CD4-positive, alpha-beta T cell (primary cell): ENCODE measurements at regions of chr11 and their contacts with region 1.

Region 1: DNA sequence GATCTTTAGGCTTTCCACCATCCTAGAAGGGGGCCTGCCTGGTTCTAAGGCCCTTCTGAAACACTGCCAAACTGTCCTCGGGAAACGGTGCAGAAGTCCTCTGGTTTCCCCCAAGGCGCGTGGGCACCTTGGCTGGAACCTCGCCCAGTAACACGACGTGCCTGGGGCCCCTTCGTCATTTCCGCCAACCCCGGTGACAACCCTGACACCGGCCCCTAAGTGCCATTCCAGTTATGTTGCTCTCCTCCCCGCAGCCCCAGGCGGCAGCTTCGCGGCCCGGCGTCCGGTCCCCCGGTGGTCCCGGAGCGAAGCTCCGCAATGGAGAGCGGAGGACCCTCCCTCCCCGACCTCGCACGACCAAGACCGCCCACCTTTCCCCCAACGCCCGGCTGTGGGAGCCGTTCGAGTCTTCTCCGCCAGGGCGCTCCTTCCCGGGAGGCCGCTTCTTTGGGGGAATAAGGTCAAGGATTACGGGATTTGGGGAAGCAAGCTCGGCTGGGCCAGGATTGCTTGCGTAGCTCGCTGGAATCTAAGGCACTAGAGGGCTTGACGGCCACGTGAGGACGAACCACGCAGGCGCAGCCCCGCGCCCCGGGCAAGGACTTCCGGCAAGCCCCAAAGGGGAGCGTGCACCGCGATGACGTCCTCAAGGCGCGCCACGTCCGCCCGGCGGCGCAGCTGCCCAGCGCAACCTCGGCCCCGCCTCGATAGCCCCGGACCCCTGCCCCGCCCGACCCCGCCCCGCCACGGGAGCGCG is 626 bp downstream of the RNH1 start:
- DNase-seq: peak; percentile 93 to 99 (median 97)
- ATAC-seq: peak; percentile 67
- H3K4me3 ChIP-seq: peak overlapping the region; percentile 78
- H3K4me3 Mint-ChIP-seq: peak overlapping the region; percentile 97
- H3K27ac ChIP-seq: peak overlapping the region; percentile 100
- H3K27ac Mint-ChIP-seq: peak overlapping the region; percentile 100
- H3K4me1 ChIP-seq: peaks cover 53% of the 10 kb centered on the region
- H3K4me1 Mint-ChIP-seq: peaks cover 24% of the 10 kb centered on the region
- H3K27me3 ChIP-seq: no peaks in the 10 kb centered on the region
- H3K27me3 Mint-ChIP-seq: peaks cover 4% of the 10 kb centered on the region
- CTCF ChIP-seq: no peak

Region 2: DNA sequence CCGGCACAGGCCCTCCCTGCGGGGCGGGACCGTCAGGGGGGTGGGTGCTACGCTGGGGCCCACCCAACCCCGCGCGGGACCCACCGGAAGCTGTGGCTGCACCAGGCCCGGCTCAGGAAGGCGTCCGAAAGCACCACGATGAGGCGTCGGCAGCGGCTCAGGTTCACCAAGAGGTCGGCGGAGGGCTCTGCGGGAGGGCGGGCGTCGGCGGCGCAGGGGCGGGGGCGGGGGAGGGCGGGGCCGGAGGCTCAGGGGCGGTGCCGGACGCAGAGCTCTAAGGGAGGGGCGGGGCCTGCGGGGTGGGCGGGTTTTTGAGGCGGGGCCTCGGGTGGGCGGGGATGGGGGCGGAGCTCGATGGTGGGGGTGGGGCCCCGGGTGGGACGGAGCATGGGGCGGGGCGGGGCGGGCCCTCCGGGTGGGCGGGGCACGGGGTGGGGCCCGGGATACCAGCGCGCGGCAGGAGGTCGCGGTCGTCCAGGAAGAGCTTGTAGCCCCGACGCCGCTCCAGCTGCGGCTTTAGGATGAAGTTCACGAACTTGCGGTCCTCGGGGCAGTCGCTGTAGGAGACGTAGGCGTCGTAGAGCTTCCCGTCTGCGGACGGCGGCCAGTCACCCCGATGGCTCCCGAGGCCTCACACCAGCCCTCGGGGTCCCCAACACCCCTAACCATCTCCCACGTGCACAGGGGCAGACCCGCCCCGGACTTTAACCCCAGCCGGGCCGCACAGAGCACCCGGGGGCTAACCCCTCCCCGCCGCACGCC is 99.3 kb before region 1 on chr11:
- CTCF ChIA-PET with region 1: interaction called, 3 read pairs
- POLR2A ChIA-PET with region 1: interaction called, 19 read pairs
- intact Hi-C with region 1: loop called (anchors 2 kb)
- DNase-seq: peak; percentile 84 to 97 (median 91)
- ATAC-seq: peak; percentile 84
- H3K4me3 ChIP-seq: peak overlapping the region; percentile 39
- H3K4me3 Mint-ChIP-seq: no peak overlapping the region
- H3K27ac ChIP-seq: peak overlapping the region; percentile 64 to 67
- H3K27ac Mint-ChIP-seq: peak overlapping the region; percentile 76
- H3K4me1 ChIP-seq: peaks cover 46% of the 10 kb centered on the region
- H3K4me1 Mint-ChIP-seq: peaks cover 8% of the 10 kb centered on the region
- H3K27me3 ChIP-seq: no peaks in the 10 kb centered on the region
- H3K27me3 Mint-ChIP-seq: no peaks in the 10 kb centered on the region
- CTCF ChIP-seq: no peak

Region 3: DNA sequence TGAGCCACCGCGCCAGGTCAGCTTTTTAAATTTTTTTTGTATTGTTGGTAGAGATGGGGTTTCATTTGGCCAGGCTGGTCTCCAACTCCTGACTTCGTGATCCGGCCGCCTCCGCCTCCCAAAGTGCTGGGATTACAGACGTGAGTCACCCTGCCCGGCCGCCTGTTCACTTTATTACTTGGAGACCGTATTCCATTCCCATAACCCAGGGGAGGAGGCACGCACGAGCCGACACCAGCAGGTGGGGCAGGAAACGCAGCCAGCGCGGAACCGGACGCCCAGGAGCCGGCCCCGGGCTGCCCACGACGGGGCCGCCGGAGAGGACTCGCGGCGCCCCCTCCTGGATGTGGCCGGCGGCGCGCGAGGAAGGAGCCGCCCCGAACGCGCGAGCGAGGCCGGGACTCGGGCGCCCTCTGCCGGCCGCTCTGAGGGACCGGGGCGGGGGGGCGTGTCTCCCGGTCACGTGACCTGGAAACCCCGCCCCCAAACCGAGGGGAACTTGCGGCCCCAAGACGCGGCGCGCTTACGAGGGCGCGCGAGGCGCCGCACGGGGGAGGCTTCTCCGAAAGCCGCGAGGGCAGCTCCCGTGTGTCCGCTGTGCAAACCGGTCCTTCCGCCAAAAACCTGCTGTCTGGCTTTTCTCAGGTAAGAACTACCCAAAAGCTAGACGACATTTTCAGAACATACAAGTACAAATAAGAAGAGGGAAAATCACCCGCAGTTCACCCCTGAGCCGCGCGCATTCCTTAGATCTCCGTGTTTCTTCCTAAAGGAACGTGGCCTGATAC is 12.2 kb after region 1 on chr11:
- CTCF ChIA-PET with region 1: interaction called, 10 read pairs
- POLR2A ChIA-PET with region 1: interaction called, 23 read pairs
- intact Hi-C with region 1: loop called in 1 of 2 experiments (anchors 1 kb)
- DNase-seq: peak; percentile 79 to 95 (median 86)
- ATAC-seq: peak; percentile 94
- H3K4me3 ChIP-seq: peak overlapping the region; percentile 43
- H3K4me3 Mint-ChIP-seq: peak overlapping the region; percentile 85
- H3K27ac ChIP-seq: peak overlapping the region in 1 of 2 donors; percentile 41
- H3K27ac Mint-ChIP-seq: no peak overlapping the region
- H3K4me1 ChIP-seq: peaks cover 8% of the 10 kb centered on the region
- H3K4me1 Mint-ChIP-seq: peaks cover 4% of the 10 kb centered on the region
- H3K27me3 ChIP-seq: no peaks in the 10 kb centered on the region
- H3K27me3 Mint-ChIP-seq: no peaks in the 10 kb centered on the region
- CTCF ChIP-seq: peak; percentile 96

Region 4: GRCh38 chr11:568306-569157 is 62.1 kb after region 1 on chr11:
- CTCF ChIA-PET with region 1: no interaction called
- POLR2A ChIA-PET with region 1: no interaction called
- intact Hi-C with region 1: loop called in 1 of 2 experiments (anchors 2 kb)
- DNase-seq: peak; percentile 81 to 97 (median 90)
- ATAC-seq: peak; percentile 91
- H3K4me3 ChIP-seq: peak overlapping the region; percentile 70
- H3K4me3 Mint-ChIP-seq: peak overlapping the region; percentile 82
- H3K27ac ChIP-seq: peak overlapping the region; percentile 17 to 69
- H3K27ac Mint-ChIP-seq: no peak overlapping the region
- H3K4me1 ChIP-seq: peaks cover 14% of the 10 kb centered on the region
- H3K4me1 Mint-ChIP-seq: peaks cover 4% of the 10 kb centered on the region
- H3K27me3 ChIP-seq: no peaks in the 10 kb centered on the region
- H3K27me3 Mint-ChIP-seq: no peaks in the 10 kb centered on the region
- CTCF ChIP-seq: no peak

Region 5: DNA sequence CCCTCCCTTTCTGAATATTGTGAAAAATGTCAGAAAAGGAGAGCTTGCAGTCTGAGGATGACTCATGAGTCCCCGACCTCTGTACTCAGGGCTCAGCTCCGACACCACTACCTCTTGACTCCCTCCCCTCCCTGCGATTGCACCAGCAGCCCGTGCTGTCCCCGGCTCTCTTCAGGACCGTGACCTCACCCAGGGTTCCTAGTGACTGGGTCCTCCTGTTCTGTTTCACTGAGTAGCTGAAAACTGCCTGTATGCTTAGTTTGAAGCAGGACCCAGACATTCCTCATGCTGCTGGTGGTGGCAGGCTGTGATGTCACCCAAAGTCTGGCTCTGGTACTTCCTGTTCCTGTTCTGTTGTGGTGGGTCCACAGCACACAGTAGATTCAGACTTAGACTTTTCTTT is 81.6 kb after region 1 on chr11:
- CTCF ChIA-PET with region 1: no interaction called
- POLR2A ChIA-PET with region 1: no interaction called
- intact Hi-C with region 1: no loop called
- DNase-seq: peak; percentile 40 to 89 (median 71)
- ATAC-seq: peak; percentile 91
- H3K4me3 ChIP-seq: no peak overlapping the region
- H3K4me3 Mint-ChIP-seq: peak overlapping the region; percentile 56
- H3K27ac ChIP-seq: peak overlapping the region; percentile 51 to 77
- H3K27ac Mint-ChIP-seq: peak overlapping the region; percentile 96
- H3K4me1 ChIP-seq: peaks cover 20% of the 10 kb centered on the region
- H3K4me1 Mint-ChIP-seq: peaks cover 22% of the 10 kb centered on the region
- H3K27me3 ChIP-seq: no peaks in the 10 kb centered on the region
- H3K27me3 Mint-ChIP-seq: no peaks in the 10 kb centered on the region
- CTCF ChIP-seq: no peak

Region 6: DNA sequence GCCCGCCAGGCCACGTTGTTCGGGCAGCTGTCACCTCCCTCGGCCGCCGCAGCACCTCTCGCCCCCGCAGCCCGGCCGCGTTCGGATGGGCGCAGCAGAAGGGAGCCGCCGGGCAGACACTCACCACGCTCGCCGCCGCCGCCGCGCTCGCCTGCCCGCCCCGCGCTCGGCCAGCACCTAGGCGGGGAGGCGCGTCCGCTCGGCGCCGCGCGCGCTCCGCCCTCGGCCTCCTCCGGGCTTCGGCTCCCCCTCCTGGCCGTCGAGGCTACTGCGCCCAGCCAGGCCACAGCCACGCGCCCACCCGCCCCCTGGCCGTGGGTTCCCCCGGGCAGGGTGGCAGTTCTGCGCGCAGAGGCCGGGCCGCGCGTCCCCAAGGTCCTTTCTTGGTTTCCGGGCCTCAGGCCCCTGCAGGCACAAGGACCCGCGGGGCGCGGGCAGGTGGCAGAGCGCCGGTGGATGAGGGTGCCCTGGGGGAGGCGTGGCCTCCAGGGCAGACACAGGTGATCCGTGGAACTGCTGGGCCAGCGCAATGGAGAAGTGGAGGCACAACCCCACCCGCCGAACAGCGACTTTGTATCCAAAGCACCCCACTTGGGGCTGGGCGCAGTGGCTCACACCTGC is 291.8 kb after region 1 on chr11 and contains the start of gene SLC25A22:
- CTCF ChIA-PET with region 1: no interaction called
- POLR2A ChIA-PET with region 1: no interaction called
- intact Hi-C with region 1: loop called in 1 of 2 experiments (anchors 5 kb)
- DNase-seq: peak; percentile 62 to 94 (median 81)
- ATAC-seq: peak; percentile 61
- H3K4me3 ChIP-seq: peak within 1 kb of the TSS; percentile 89
- H3K4me3 Mint-ChIP-seq: peak within 1 kb of the TSS; percentile 92
- H3K27ac ChIP-seq: peak within 1 kb of the TSS; percentile 69 to 91
- H3K27ac Mint-ChIP-seq: peak within 1 kb of the TSS; percentile 91
- H3K4me1 ChIP-seq: peaks cover 60% of the 10 kb centered on the region
- H3K4me1 Mint-ChIP-seq: peaks cover 16% of the 10 kb centered on the region
- H3K27me3 ChIP-seq: no peaks in the 10 kb centered on the region
- H3K27me3 Mint-ChIP-seq: no peaks in the 10 kb centered on the region
- CTCF ChIP-seq: peak; percentile 66
- total RNA-seq, gene SLC25A22: 9.1 to 11.1 TPM